Aorta (tissue), 5 donors: ENCODE measurements at regions of chr10 and their contacts with region 1.

Region 1: GRCh38 chr10:21495752-21496342 is 29.6 kb downstream of the SKIDA1 start:
- DNase-seq: peak; percentile 86 to 96
- ATAC-seq: peak; percentile 94
- H3K4me3 ChIP-seq: peak overlapping the region; percentile 72 to 90
- H3K27ac ChIP-seq: no peak overlapping the region
- H3K4me1 ChIP-seq: no peaks in the 10 kb centered on the region
- H3K27me3 ChIP-seq: no peaks in the 10 kb centered on the region

Region 2: GRCh38 chr10:21278491-21279239 is 217.2 kb before region 1 on chr10:
- intact Hi-C with region 1: loop called (anchors 5 to 10 kb)
- DNase-seq: peak; percentile 95 to 97
- ATAC-seq: peak; percentile 92
- H3K4me3 ChIP-seq: no peak overlapping the region
- H3K27ac ChIP-seq: no peak overlapping the region
- H3K4me1 ChIP-seq: no peaks in the 10 kb centered on the region
- H3K27me3 ChIP-seq: no peaks in the 10 kb centered on the region

Region 3: DNA sequence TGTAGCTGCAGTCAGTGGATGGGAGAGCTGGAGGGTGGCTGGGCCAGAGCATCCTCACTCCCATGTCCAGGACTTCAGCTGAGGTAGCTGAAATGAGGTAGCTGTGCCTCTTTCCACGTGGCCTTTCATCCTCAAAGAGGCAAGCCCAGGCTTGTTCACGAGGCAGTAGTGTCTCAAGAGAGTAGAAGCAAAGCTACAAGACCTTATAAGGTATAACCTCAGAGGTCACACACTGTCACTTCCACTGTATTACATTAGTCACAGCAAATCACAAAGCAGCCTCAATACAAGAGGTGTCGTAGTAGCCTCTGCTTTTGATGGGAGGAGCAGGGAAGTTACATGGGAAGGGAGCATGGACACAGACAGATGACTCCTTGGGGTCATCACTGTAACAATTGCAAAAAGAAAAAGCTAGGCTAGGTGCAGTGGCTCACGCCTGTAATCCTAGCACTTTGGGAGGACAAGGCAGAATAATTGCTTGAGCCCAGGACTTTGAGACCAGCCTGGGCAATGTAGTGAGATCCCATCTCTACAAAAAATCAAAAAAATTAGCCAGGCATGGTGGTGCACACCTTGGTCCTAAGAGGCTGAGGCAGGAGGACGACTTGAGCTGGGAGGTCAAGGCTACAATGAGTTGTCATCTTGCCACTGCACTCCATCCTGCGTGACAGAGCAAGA is 67.9 kb before region 1 on chr10:
- intact Hi-C with region 1: no loop called
- DNase-seq: no peak
- ATAC-seq: no peak
- H3K4me3 ChIP-seq: no peak overlapping the region
- H3K27ac ChIP-seq: no peak overlapping the region
- H3K4me1 ChIP-seq: no peaks in the 10 kb centered on the region
- H3K27me3 ChIP-seq: no peaks in the 10 kb centered on the region

Region 4: GRCh38 chr10:21534604-21535493 is 39.0 kb after region 1 on chr10:
- intact Hi-C with region 1: loop called in 1 of 2 experiments (anchors 5 kb)
- DNase-seq: peak; percentile 76 to 81
- ATAC-seq: peak; percentile 3
- H3K4me3 ChIP-seq: peak overlapping the region; percentile 75 to 95
- H3K27ac ChIP-seq: peak overlapping the region; percentile 33 to 55
- H3K4me1 ChIP-seq: no peaks in the 10 kb centered on the region
- H3K27me3 ChIP-seq: no peaks in the 10 kb centered on the region

Region 5: DNA sequence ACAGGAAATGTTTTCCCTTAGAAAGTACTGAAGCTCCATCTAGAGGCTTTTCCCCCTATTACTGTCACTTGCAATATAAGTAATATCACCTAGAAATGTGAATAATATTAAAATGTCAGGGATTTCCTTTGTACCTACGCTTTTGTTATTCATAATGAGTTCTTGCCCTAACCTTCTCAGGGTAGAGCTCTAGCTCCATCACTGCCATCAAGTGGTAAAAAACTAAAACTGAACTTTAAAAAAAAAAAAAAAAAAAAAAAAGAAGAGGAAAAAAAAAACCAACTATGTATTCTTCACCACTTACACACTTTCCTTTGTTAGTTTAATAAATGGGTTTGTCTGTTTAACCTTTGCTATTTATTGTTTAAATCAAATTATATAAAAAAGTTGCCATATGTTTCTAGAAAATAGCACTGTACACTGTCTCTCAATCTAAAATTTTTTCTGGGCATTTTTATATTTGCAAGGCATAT is 457.8 kb after region 1 on chr10:
- intact Hi-C with region 1: loop called (anchors 10 kb)
- DNase-seq: no peak
- ATAC-seq: no peak
- H3K4me3 ChIP-seq: no peak overlapping the region
- H3K27ac ChIP-seq: no peak overlapping the region
- H3K4me1 ChIP-seq: no peaks in the 10 kb centered on the region
- H3K27me3 ChIP-seq: no peaks in the 10 kb centered on the region

Region 6: GRCh38 chr10:22251751-22252223 is 755.9 kb after region 1 on chr10:
- intact Hi-C with region 1: loop called (anchors 10 kb)
- DNase-seq: peak; percentile 81 to 83
- ATAC-seq: peak; percentile 78
- H3K4me3 ChIP-seq: peak overlapping the region; percentile 65 to 80
- H3K27ac ChIP-seq: peak overlapping the region; percentile 92 to 93
- H3K4me1 ChIP-seq: no peaks in the 10 kb centered on the region
- H3K27me3 ChIP-seq: no peaks in the 10 kb centered on the region

Region 7: DNA sequence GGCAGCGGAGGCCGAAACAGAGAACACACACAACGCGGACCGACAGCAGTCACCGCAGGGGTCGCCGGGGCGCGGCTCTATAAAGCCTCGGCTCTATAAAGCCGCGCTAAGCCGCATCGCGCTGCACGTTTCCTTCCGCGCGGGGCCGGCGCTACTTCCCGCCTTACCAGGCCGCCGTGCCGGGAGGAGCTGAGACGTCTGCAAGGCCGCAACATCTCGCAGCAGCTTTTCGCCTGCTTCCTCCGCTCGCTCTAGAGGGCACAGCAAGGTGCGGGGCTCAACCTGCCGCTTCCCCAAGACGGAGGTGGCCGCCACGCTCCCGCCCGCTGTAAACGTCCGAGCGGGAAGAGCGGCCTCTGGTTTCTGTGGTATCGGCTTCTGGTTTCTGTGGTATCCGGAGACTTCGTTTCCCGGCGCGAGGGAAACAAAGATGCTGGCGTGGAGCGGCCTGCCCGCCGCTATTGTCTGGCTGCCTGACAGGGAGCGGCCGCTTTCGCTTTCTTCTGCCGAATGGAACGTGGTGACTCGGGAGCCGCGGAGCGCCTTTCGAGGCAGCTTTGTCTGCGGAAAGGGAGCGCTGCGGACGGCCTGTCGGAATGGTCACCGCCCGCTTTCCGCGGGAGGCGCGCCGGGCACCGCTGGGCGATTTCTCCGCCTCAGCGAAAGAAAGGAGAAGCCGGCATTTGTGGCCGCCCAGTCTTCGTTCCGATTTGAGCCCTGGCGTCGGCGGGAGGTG is 941.2 kb after region 1 on chr10:
- intact Hi-C with region 1: loop called in 1 of 2 experiments (anchors 10 kb)
- DNase-seq: peak; percentile 95 to 96
- ATAC-seq: peak; percentile 96
- H3K4me3 ChIP-seq: peak overlapping the region; percentile 78 to 81
- H3K27ac ChIP-seq: peak overlapping the region; percentile 68 to 85
- H3K4me1 ChIP-seq: no peaks in the 10 kb centered on the region
- H3K27me3 ChIP-seq: no peaks in the 10 kb centered on the region